Naive thymus-derived CD4-positive, alpha-beta T cell (primary cell): ENCODE measurements at regions of chr12 and their contacts with region 1.

Region 1: GRCh38 chr12:40107098-40107802 is 1.4 kb upstream of the SLC2A13 start:
- DNase-seq: peak; percentile 71 to 89 (median 81)
- ATAC-seq: peak; percentile 69
- H3K4me3 ChIP-seq: peak overlapping the region; percentile 50
- H3K4me3 Mint-ChIP-seq: peak overlapping the region; percentile 80 to 94 (median 90)
- H3K27ac ChIP-seq: peak overlapping the region; percentile 4
- H3K27ac Mint-ChIP-seq: peak overlapping the region in 8 of 9 donors; percentile 58 to 88 (median 74)
- H3K4me1 ChIP-seq: peaks cover 10 to 16% of the 10 kb centered on the region in 2 donors
- H3K4me1 Mint-ChIP-seq: peaks cover 20 to 38% (median 31%) of the 10 kb centered on the region in 7 donors
- H3K27me3 ChIP-seq: no peaks in the 10 kb centered on the region
- H3K27me3 Mint-ChIP-seq: peaks cover 0 to 35% (median 2%) of the 10 kb centered on the region in 5 donors

Region 2: GRCh38 chr12:38316391-38317129 is 1790.7 kb before region 1 on chr12 and contains the start of gene ALG10B:
- CTCF ChIA-PET with region 1: no interaction called
- POLR2A ChIA-PET with region 1: no interaction called
- intact Hi-C with region 1: loop called (anchors 2 to 10 kb)
- DNase-seq: peak; percentile 86 to 96 (median 94)
- ATAC-seq: peak; percentile 99
- H3K4me3 ChIP-seq: peak within 1 kb of the TSS; percentile 95
- H3K4me3 Mint-ChIP-seq: peak within 1 kb of the TSS; percentile 92 to 98 (median 94)
- H3K27ac ChIP-seq: peak within 1 kb of the TSS; percentile 75
- H3K27ac Mint-ChIP-seq: peak within 1 kb of the TSS; percentile 96 to 99 (median 97)
- H3K4me1 ChIP-seq: peaks cover 0 to 13% of the 10 kb centered on the region in 2 donors
- H3K4me1 Mint-ChIP-seq: peaks cover 5 to 44% (median 35%) of the 10 kb centered on the region in 7 donors
- H3K27me3 ChIP-seq: no peaks in the 10 kb centered on the region
- H3K27me3 Mint-ChIP-seq: peaks cover 0 to 9% (median 0%) of the 10 kb centered on the region in 5 donors
- total RNA-seq, gene ALG10B: 10.5 to 17.1 (median 12.0) TPM

Region 3: DNA sequence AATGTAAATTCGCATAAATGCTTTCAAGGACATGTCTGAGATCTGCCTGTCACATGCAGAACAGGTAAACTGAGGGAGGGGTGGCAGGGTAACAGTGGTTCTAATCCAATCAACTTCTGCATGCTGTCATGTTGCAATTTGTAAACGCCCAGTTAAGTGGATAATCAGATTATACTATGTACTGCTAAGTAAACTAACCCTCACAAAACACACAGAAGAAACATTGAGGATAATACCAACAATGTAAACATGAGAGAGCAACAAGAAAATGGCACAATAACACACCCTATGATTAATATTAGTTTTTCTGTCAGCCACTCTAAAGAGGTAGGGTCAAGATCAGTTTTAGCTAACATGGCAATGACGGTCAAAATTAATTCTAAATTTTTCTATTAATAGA is 788.1 kb before region 1 on chr12:
- CTCF ChIA-PET with region 1: no interaction called
- POLR2A ChIA-PET with region 1: no interaction called
- intact Hi-C with region 1: loop called (anchors 1 kb)
- DNase-seq: no peak
- ATAC-seq: no peak
- H3K4me3 ChIP-seq: no peak overlapping the region
- H3K4me3 Mint-ChIP-seq: no peak overlapping the region
- H3K27ac ChIP-seq: no peak overlapping the region
- H3K27ac Mint-ChIP-seq: no peak overlapping the region
- H3K4me1 ChIP-seq: no peaks in the 10 kb centered on the region
- H3K4me1 Mint-ChIP-seq: peaks cover 0 to 5% (median 0%) of the 10 kb centered on the region in 7 donors
- H3K27me3 ChIP-seq: no peaks in the 10 kb centered on the region
- H3K27me3 Mint-ChIP-seq: no peaks in the 10 kb centered on the region

Region 4: DNA sequence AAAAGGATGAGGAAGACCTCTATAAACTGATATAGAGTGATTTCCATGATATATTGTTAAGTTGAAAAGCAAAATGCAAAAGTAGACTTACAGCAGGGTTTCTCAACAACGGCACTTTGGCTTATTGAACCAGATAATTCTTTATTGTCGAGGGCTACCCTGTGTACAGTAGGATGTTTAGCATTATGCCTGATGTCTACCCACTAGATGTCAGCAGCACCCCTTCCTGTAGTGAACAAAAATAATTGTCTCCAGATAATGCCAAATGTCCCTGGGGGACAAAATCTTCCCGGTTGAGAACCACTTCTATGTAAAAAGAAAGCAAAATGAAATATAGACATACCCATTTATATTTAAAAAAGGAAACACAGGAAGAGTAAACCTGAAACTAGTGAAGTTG is 520.0 kb before region 1 on chr12:
- CTCF ChIA-PET with region 1: no interaction called
- POLR2A ChIA-PET with region 1: no interaction called
- intact Hi-C with region 1: loop called in 1 of 2 experiments (anchors 1 kb)
- DNase-seq: peak in 7 of 9 donors; percentile 10 to 56 (median 31)
- ATAC-seq: peak; percentile 66
- H3K4me3 ChIP-seq: no peak overlapping the region
- H3K4me3 Mint-ChIP-seq: no peak overlapping the region
- H3K27ac ChIP-seq: no peak overlapping the region
- H3K27ac Mint-ChIP-seq: no peak overlapping the region
- H3K4me1 ChIP-seq: no peaks in the 10 kb centered on the region
- H3K4me1 Mint-ChIP-seq: peaks cover 0 to 17% (median 9%) of the 10 kb centered on the region in 7 donors
- H3K27me3 ChIP-seq: no peaks in the 10 kb centered on the region
- H3K27me3 Mint-ChIP-seq: no peaks in the 10 kb centered on the region

Region 5: DNA sequence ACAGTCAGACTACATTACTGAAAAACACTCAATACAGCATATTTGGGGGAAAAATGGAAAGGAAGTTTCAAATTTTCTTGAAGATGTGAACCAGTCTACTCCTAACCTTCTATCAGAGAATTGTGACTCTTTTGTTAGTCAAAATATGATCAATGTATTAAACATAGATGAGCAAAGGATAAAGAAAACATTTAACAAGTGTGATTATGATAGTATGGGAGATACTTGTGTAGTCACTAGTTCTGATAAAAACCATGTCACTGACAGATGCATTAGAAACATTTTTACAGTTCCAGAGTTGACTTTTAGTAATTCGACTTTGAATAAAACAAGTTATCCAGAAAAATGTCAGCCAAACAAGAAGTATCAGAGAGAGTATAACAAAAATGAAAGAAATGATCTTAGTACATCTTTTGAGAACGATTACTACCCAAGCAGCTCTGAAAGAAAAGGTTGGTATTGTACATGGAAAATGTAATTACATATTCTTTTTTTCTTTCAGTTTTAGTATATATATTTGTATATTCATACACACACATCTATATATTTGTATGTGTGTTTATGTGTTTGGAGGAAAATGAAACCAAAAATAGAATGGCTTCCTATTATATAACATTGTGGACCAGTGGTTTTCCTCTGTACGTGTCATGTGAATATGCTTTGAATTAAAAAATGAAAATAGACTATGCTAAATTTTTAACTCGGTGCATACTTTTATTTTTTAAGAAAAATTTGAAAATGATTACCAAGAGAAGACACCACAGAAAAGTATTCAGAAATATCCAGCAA is 424.4 kb before region 1 on chr12:
- CTCF ChIA-PET with region 1: no interaction called
- POLR2A ChIA-PET with region 1: no interaction called
- intact Hi-C with region 1: loop called (anchors 2 to 5 kb)
- DNase-seq: peak in 6 of 9 donors; percentile 27 to 60 (median 44)
- ATAC-seq: peak; percentile 75
- H3K4me3 ChIP-seq: peak overlapping the region; percentile 30
- H3K4me3 Mint-ChIP-seq: peak overlapping the region; percentile 61 to 90 (median 83)
- H3K27ac ChIP-seq: peak overlapping the region; percentile 64
- H3K27ac Mint-ChIP-seq: peak overlapping the region; percentile 87 to 99 (median 96)
- H3K4me1 ChIP-seq: peaks cover 24 to 26% of the 10 kb centered on the region in 2 donors
- H3K4me1 Mint-ChIP-seq: peaks cover 16 to 45% (median 38%) of the 10 kb centered on the region in 7 donors
- H3K27me3 ChIP-seq: no peaks in the 10 kb centered on the region
- H3K27me3 Mint-ChIP-seq: no peaks in the 10 kb centered on the region

Region 6: DNA sequence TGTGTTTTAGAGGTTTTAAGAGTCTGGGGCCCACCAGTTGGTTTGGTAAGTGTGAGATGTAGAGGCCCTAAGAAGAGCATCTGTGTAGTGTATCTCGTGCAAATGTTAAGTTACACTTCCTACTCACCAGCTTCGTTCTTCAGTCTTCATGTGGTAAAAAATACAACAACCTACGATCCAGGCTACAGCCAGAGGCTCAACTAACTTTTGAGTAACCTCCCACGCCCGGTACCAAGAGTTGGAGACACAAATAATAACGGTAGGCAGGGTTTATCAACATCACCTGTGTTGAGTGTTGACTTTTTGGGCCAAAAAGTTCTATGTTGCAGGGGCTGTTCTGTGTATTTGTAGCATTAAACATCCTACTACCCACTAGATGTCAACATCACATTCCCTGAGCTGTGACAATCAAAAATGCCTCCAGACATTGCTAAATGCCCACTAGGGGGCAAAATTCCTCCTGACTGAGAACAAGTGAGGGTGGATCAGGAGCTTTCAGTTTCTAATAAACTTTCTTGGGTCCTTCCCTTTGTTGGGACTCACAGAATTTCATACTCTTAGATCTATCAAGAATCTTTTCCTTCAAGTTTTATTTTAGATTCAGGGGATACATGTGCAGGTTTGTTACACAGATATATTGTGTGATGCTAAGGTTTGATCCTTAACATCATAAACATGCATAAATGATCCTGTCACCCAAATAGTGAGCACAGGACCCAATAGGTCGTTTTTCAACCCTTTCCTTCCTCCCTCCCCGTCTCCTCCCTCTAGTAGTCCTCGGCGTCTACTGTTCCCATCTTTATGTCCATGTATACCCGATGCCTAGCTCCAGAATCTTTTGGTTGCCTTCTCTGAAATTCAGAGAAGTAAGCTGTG is 96.1 kb before region 1 on chr12:
- CTCF ChIA-PET with region 1: interaction called, 33 read pairs
- POLR2A ChIA-PET with region 1: interaction called, 3 read pairs
- intact Hi-C with region 1: loop called (anchors 1 kb)
- DNase-seq: peak in 8 of 9 donors; percentile 30 to 70 (median 64)
- ATAC-seq: peak; percentile 94
- H3K4me3 ChIP-seq: peak overlapping the region; percentile 5
- H3K4me3 Mint-ChIP-seq: peak overlapping the region; percentile 6 to 83 (median 71)
- H3K27ac ChIP-seq: no peak overlapping the region
- H3K27ac Mint-ChIP-seq: peak overlapping the region in 3 of 9 donors; percentile 19 to 82 (median 41)
- H3K4me1 ChIP-seq: no peaks in the 10 kb centered on the region
- H3K4me1 Mint-ChIP-seq: peaks cover 5 to 19% (median 9%) of the 10 kb centered on the region in 7 donors
- H3K27me3 ChIP-seq: no peaks in the 10 kb centered on the region
- H3K27me3 Mint-ChIP-seq: no peaks in the 10 kb centered on the region

Region 7: GRCh38 chr12:40393031-40393430 is 285.8 kb after region 1 on chr12:
- CTCF ChIA-PET with region 1: no interaction called
- POLR2A ChIA-PET with region 1: no interaction called
- intact Hi-C with region 1: no loop called
- DNase-seq: no peak
- ATAC-seq: no peak
- H3K4me3 ChIP-seq: no peak overlapping the region
- H3K4me3 Mint-ChIP-seq: no peak overlapping the region
- H3K27ac ChIP-seq: no peak overlapping the region
- H3K27ac Mint-ChIP-seq: no peak overlapping the region
- H3K4me1 ChIP-seq: no peaks in the 10 kb centered on the region
- H3K4me1 Mint-ChIP-seq: no peaks in the 10 kb centered on the region
- H3K27me3 ChIP-seq: no peaks in the 10 kb centered on the region
- H3K27me3 Mint-ChIP-seq: no peaks in the 10 kb centered on the region

Region 8: DNA sequence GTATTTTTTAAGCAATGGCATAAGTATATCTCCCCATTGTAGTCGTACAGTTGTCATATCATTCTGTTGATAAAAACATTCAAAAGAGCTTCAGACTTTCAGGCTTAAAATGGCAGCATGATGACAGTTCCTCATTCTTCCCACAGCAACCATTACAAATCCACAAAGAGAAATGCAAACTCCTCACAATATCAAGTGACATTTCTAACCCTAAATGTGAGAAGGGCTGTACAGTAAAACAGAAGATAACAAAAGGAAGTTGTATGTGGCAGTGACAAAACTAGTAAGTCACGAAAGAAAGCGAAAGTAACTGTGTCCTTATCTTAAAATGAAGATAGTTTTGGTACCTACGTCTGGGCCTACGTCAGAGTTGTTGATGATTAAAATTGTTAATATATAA is 1990.7 kb after region 1 on chr12:
- CTCF ChIA-PET with region 1: no interaction called
- POLR2A ChIA-PET with region 1: no interaction called
- intact Hi-C with region 1: loop called in 1 of 2 experiments (anchors 10 kb)
- DNase-seq: peak in 7 of 9 donors; percentile 56 to 79 (median 68)
- ATAC-seq: peak; percentile 94
- H3K4me3 ChIP-seq: peak overlapping the region; percentile 48
- H3K4me3 Mint-ChIP-seq: peak overlapping the region; percentile 84 to 97 (median 90)
- H3K27ac ChIP-seq: peak overlapping the region; percentile 82
- H3K27ac Mint-ChIP-seq: peak overlapping the region; percentile 92 to 100 (median 97)
- H3K4me1 ChIP-seq: peaks cover 24 to 31% of the 10 kb centered on the region in 2 donors
- H3K4me1 Mint-ChIP-seq: peaks cover 33 to 48% (median 43%) of the 10 kb centered on the region in 7 donors
- H3K27me3 ChIP-seq: no peaks in the 10 kb centered on the region
- H3K27me3 Mint-ChIP-seq: no peaks in the 10 kb centered on the region